Heart left ventricle (tissue), 16 donors: ENCODE measurements at regions of chrX and their contacts with region 1.

Region 1: GRCh38 chrX:31652650-31653049 is 580.8 kb upstream of the FTHL17 start:
- DNase-seq: no peak
- ATAC-seq: peak in 2 of 4 donors; percentile 28 to 38
- H3K4me3 ChIP-seq: no peak overlapping the region
- H3K27ac ChIP-seq: peak overlapping the region in 1 of 12 donors; percentile 46
- H3K4me1 ChIP-seq: no peaks in the 10 kb centered on the region
- H3K27me3 ChIP-seq: no peaks in the 10 kb centered on the region
- CTCF ChIP-seq: no peak
- POLR2A ChIP-seq: no peak

Region 2: DNA sequence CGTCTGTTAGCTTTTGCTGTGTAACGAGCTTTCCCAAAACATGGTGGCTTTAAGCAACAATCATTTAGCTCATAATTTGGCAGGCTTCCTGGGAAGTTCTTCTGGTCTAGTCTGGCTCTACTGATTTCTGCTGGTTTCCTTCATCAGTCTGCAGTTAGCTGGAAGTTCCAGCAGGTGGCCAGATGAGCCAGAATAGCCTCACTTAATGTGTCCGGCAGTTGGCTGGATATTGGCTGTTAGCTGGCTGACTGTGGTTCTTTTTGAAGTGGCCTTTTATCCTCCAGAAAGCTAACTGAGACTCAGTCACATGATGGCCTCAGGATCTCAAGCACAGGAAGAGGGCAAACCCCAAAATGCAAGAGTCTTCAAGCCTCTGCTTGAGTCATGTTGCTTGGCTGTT is 615.8 kb before region 1 on chrX:
- intact Hi-C with region 1: loop called in 8 of 10 experiments (anchors 5 to 10 kb)
- DNase-seq: peak in 4 of 5 donors; percentile 19 to 50 (median 36)
- ATAC-seq: peak in 2 of 4 donors; percentile 69 to 85
- H3K4me3 ChIP-seq: no peak overlapping the region
- H3K27ac ChIP-seq: no peak overlapping the region
- H3K4me1 ChIP-seq: no peaks in the 10 kb centered on the region
- H3K27me3 ChIP-seq: peaks cover 0 to 3% (median 0%) of the 10 kb centered on the region in 9 donors
- CTCF ChIP-seq: peak; percentile 30 to 68 (median 51)
- POLR2A ChIP-seq: no peak

Region 3: DNA sequence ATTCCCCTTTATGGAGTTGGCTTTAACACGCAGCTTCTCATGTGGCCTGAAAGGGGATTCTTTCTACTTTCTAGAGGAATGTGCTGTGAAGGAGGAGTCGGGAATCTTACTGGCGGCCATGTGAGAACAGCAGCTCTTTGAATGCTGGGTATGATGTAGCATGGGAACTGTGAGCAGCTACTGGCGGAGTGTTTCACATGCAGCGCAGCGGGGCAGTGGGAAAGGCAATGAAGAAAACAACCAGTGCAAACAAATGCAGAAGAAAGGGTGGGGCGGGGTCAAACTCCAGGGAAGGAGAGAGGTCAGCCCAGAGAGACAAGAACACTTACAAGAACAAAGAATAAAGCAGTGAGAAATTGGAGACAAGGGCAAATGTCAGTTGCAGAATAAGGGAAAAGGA is 217.1 kb before region 1 on chrX:
- intact Hi-C with region 1: loop called in 1 of 10 experiments (anchors 10 kb)
- DNase-seq: peak in 1 of 5 donors; percentile 56
- ATAC-seq: no peak
- H3K4me3 ChIP-seq: no peak overlapping the region
- H3K27ac ChIP-seq: no peak overlapping the region
- H3K4me1 ChIP-seq: no peaks in the 10 kb centered on the region
- H3K27me3 ChIP-seq: no peaks in the 10 kb centered on the region
- CTCF ChIP-seq: no peak
- POLR2A ChIP-seq: no peak